ENCODE measurements at regions of chr6 and their contacts with region 1.

Region 1: DNA sequence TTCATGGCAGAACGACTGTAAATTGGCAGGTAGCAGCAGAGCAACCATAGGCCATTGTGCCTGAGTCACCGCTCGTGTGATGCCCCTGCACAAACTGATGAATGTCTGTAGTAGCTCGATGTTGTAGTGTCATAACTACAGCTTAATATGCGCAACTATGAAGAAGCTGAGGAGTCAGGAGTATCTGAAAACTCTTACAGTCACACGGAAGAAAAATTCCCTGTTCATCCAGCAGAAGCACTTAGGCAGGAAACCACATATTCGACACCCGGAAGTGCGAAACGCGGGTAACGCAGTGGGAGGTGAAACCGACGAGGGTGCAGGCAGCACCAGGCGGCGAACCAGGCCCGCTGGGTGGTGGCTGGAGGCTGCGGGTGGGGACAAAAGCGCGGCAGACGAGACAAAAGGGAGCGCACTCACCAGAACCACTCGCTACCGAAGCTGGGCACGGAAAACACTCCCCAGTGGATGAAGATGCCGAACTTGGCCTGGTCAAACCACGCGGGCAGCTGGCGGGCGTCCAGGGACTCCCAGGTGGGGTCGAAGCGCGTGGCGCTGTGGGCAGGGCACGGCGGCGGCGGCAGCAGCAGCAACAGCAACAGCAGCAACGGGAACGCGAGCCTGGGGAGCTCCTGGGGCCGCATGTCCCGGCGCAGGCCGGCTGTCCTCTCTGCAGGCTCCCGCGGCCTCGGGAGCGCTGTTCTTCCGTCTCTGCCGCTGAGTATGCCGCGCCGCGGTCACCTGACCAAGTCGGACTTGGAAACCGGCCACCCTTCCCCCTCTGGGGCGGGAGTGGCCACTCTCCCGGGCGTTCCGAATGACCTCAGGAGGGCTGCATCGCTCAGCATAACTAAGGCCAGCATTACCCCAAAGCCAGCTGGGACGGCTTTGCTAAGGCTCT is at the start of gene FUCA2:
- DNase-seq: peak; percentile 96
- ATAC-seq: peak; percentile 92
- total RNA-seq, gene FUCA2: 46.1 TPM

Region 2: GRCh38 chr6:143569040-143569439 is 57.8 kb after region 1 on chr6:
- intact Hi-C with region 1: loop called (anchors 2 kb)
- DNase-seq: no peak
- ATAC-seq: no peak

Region 3: GRCh38 chr6:143592335-143592734 is 81.1 kb after region 1 on chr6:
- intact Hi-C with region 1: no loop called
- DNase-seq: no peak
- ATAC-seq: no peak

Region 4: DNA sequence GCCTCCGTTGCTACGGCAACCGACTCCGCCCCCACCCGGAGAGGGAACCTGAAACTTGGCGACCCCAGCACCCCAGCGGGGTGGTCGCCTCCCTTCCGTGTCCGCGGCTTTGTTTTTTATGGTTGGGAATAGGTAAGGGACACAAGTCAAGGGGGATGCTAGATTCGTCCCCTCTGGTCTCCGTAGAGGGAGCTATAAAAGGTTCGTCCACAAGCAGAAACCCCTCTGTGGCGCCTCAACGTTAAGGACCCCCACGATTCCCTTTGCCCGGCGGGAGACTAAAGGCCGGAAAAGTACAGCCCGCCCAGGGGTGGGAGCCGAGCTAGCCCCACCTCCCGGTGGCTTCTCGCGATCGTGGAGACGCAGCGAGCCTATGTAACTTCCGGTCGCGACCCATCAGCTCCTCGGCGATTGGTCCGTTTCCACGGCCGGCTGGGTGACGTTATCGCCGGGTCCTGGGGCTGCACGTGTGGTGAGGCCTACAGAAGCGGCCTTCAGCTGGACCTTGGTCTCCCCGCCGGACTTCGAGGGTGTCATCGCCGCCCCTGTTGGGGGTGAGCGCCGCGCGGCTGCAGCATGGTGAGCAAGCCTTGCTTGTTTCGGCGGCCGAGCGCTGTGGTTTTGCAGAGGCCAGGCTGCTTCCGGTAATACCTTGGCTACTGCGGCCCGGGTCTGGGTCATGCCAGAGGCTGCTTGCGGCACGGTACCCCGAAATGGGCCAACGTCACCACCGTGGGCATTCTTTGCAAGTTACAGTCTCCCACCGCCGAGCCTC is 331.8 kb after region 1 on chr6 and contains the start of gene LTV1:
- intact Hi-C with region 1: loop called (anchors 5 kb)
- DNase-seq: peak; percentile 98
- ATAC-seq: peak; percentile 100
- total RNA-seq, gene LTV1: 12.4 TPM

Region 5: GRCh38 chr6:144095331-144096002 is 584.2 kb after region 1 on chr6 and contains the start of gene SF3B5:
- intact Hi-C with region 1: loop called (anchors 1 kb)
- DNase-seq: peak; percentile 99
- ATAC-seq: peak; percentile 100
- total RNA-seq, gene SF3B5: 121 TPM